Activated CD8-positive, alpha-beta T cell treated with anti-CD3 and anti-CD28 coated beads for 36 hours (primary cell): ENCODE measurements at regions of chr5 and their contacts with region 1.

Region 1: DNA sequence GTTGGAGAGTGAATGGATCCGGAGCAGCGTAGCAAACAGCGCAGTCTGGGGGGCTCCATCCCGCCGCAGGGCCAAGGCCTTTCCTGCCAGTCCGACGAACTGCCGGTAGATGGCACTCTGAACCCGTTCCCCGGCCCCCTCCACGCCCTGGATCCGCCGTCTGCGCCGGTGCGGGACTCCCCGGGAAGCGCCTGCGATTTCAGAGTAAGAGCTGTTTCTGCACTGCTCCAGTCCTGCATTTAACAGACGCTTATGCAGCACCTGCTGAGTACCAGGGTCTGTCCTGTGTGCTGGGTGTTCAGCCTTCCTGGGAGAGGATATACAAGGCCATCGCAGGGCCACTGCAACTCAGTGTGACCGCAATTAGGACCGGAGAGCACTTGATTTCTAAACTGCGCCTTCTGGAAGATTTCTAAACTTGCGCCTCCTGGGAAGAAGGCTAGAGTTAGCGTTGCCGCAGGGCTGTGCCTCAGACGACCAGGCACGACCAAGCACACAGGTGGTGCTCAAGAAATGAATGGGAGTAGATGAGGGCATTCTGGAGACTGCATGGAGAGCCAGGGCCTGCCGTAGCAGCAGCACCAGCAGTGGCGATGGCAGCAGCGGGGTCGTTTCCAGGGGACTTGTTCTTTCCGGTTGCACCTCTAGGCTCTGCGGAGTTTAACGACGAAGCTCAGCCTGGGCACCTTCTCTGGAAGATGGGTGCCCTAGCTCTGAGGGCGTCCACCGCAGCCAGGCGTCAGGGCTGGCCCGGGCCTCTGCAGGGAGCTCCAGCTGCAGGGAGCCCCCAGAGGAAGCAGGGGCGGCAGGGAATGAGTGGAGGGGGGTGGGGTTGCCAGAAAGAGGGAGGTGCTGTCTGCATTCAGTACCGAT is 14.3 kb upstream of the TIFAB start:
- DNase-seq: peak; percentile 81
- ATAC-seq: peak; percentile 89
- H3K4me3 Mint-ChIP-seq: peak overlapping the region; percentile 39
- H3K27ac Mint-ChIP-seq: no peak overlapping the region
- H3K4me1 Mint-ChIP-seq: peaks cover 9% of the 10 kb centered on the region
- H3K27me3 Mint-ChIP-seq: peaks cover 32% of the 10 kb centered on the region
- CTCF ChIP-seq: peak; percentile 86

Region 2: GRCh38 chr5:135437796-135438560 is 28.4 kb before region 1 on chr5:
- CTCF ChIA-PET with region 1: interaction called, 10 read pairs
- POLR2A ChIA-PET with region 1: no interaction called
- intact Hi-C with region 1: no loop called
- DNase-seq: no peak
- ATAC-seq: no peak
- H3K4me3 Mint-ChIP-seq: no peak overlapping the region
- H3K27ac Mint-ChIP-seq: no peak overlapping the region
- H3K4me1 Mint-ChIP-seq: no peaks in the 10 kb centered on the region
- H3K27me3 Mint-ChIP-seq: peaks cover 8% of the 10 kb centered on the region
- CTCF ChIP-seq: no peak

Region 3: GRCh38 chr5:135476615-135477582 is 10.5 kb after region 1 on chr5:
- CTCF ChIA-PET with region 1: interaction called, 19 read pairs
- POLR2A ChIA-PET with region 1: no interaction called
- intact Hi-C with region 1: no loop called
- DNase-seq: no peak
- ATAC-seq: no peak
- H3K4me3 Mint-ChIP-seq: no peak overlapping the region
- H3K27ac Mint-ChIP-seq: no peak overlapping the region
- H3K4me1 Mint-ChIP-seq: no peaks in the 10 kb centered on the region
- H3K27me3 Mint-ChIP-seq: peaks cover 14% of the 10 kb centered on the region
- CTCF ChIP-seq: no peak

Region 4: GRCh38 chr5:135538261-135538660 is 71.8 kb after region 1 on chr5:
- CTCF ChIA-PET with region 1: interaction called, 12 read pairs
- POLR2A ChIA-PET with region 1: no interaction called
- intact Hi-C with region 1: no loop called
- DNase-seq: no peak
- ATAC-seq: no peak
- H3K4me3 Mint-ChIP-seq: no peak overlapping the region
- H3K27ac Mint-ChIP-seq: no peak overlapping the region
- H3K4me1 Mint-ChIP-seq: peaks cover 11% of the 10 kb centered on the region
- H3K27me3 Mint-ChIP-seq: peaks cover 83% of the 10 kb centered on the region
- CTCF ChIP-seq: no peak

Region 5: DNA sequence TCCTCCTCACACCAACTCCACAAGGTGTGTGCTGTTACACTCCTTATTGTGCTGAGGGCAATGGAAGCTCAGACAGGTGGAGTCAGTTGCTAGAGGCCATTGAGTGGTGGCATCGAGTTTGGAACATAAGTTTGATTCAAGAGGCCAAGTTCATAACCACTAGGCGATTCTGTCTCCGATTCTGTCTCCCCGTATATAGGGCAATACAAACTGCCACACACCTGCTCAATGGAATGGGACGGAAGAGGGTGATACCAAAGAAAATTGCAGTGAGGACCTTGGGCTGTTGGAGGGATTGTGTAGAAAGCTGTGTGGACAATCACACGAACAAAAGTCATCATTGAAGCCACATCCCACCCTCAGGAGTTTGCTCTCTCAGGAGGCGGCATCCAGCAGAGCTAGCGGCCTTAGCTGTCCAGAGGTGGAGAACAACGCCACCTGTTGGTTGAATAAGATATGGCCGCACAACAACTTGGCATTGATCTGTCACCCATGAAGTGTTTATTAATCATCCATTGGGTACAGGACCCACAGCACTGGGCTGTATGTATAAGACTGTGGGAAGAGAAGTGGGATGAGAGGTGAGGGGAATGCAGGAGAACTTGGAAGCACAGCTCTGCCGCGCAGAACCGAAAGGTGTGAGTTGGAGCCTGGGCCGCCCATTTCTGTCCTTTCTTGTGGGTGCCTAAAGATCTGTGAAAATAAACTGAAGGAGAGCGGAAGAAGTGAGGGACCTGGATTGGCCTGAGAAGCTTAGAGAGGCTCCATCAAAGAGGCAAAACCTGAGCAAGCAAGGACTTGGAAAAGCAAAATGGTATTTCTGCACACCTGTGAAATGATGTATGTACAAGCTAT is 85.4 kb after region 1 on chr5:
- CTCF ChIA-PET with region 1: interaction called, 430 read pairs
- POLR2A ChIA-PET with region 1: interaction called, 3 read pairs
- intact Hi-C with region 1: loop called (anchors 2 kb)
- DNase-seq: peak; percentile 81
- ATAC-seq: peak; percentile 91
- H3K4me3 Mint-ChIP-seq: no peak overlapping the region
- H3K27ac Mint-ChIP-seq: no peak overlapping the region
- H3K4me1 Mint-ChIP-seq: no peaks in the 10 kb centered on the region
- H3K27me3 Mint-ChIP-seq: peaks cover 40% of the 10 kb centered on the region
- CTCF ChIP-seq: peak; percentile 79

Region 6: DNA sequence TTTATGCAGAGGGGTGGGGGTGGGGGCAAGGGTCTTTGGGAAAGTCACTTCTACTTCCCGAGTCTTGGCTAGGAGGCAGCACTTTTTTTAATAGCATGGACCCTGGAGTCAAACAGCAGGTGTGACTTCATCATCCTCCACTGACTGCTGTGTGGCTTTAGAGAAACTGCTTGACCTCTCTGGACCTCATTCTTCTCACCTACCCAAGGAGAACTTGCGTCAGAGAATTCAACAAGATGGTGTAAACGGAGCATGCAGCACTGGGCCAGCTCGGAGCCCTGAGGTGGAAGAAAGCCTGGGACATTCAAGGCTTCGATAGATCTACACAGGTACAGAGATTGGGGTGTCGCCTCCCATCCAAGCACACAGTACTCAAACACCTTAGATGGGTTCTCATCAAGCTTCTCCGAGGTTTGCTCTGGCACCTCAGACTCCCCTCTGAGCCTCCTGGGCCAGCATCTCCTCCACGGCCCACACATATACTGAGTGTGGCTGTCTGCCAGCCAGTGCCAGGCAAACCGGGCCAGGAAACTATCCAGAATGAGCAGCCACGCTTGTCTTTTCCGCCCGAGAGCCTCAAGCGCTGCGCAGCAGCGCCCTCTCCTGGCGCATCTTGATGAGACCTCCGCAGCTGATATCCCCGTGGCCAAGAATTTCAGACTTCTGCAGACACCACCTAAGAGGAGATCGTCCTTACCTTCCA is 363.4 kb after region 1 on chr5:
- CTCF ChIA-PET with region 1: interaction called, 13 read pairs
- POLR2A ChIA-PET with region 1: no interaction called
- intact Hi-C with region 1: loop called (anchors 5 kb)
- DNase-seq: peak; percentile 70
- ATAC-seq: peak; percentile 60
- H3K4me3 Mint-ChIP-seq: no peak overlapping the region
- H3K27ac Mint-ChIP-seq: no peak overlapping the region
- H3K4me1 Mint-ChIP-seq: no peaks in the 10 kb centered on the region
- H3K27me3 Mint-ChIP-seq: peaks cover 32% of the 10 kb centered on the region
- CTCF ChIP-seq: peak; percentile 66

Region 7: DNA sequence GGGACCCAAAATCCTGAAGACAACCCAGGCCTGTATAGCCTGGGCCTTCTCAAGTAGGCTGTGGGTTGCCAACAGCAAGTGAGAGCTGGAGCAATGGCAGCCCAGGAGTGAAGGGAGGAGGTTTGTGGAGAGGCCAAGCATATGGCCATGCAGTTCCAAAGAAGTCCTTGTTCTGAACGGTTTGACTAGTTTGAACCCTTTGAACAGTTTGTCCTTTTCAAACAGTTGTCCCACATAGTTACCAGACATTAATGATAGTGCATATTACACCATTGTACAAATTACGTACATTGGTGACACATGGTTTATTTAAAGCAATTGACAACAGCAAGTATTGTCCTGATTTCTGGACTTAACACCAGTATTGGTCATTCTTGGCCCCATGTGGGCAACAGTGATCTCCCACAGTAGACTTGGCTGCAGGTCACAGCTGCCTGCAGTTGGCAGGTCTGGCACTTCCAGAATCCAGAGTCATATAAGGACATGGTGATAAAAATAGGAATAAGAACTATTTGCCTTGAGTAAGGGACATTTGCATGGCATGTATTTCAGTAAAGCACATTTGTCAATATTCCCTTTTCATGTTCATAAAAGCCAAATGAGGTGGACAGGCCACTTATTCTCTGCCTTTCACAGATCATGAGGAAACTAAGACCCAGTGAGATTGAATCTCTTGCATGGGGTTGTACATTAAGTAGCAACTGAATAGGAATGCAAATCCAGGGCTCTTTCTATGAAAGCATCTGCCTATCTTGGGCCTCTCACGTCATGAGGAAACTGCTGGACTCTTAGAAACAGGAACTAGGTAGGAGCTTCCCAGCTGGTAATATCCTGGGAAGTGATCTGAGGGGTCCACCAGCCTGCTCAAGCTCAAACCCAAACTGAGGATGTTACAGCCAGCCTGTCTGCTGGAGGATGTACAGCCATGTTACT is 398.4 kb after region 1 on chr5:
- CTCF ChIA-PET with region 1: no interaction called
- POLR2A ChIA-PET with region 1: no interaction called
- intact Hi-C with region 1: no loop called
- DNase-seq: no peak
- ATAC-seq: no peak
- H3K4me3 Mint-ChIP-seq: no peak overlapping the region
- H3K27ac Mint-ChIP-seq: no peak overlapping the region
- H3K4me1 Mint-ChIP-seq: no peaks in the 10 kb centered on the region
- H3K27me3 Mint-ChIP-seq: no peaks in the 10 kb centered on the region
- CTCF ChIP-seq: no peak